ENCODE measurements at regions of chr5 and their contacts with region 1.

Region 1: DNA sequence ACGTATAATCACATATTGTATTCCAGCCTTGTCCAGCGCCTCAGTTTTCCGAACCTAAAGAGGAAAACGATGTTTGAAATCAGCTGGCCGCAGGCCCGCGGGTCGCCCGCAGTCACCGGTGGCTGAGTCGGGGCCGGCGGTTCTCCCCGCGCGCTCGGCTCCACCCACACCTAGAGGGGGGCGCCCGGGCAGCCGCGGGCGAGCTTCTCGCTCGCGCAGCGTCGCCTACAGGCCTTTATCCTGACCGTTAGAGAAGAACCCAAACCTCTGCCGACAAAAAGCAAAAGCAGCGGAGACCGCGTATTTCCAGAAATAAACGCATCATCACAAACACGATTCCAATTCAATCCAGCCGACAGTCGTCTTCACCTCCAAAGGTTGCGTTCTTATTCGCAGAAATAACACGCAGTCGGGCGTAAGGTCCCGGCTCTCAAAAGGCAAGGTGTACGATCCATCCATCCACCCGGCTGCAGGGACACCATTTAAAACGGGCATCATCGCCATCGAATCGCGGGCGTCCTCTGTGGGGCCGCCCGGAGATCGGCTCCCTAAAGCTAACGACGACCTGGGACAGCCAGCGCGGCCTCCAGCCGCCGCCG is 680 bp upstream of the NIPBL start:
- DNase-seq: peak; percentile 87
- H3K4me3 ChIP-seq: peak overlapping the region; percentile 82
- H3K27ac ChIP-seq: peak overlapping the region; percentile 91
- H3K4me1 ChIP-seq: peaks cover 49% of the 10 kb centered on the region
- CTCF ChIP-seq: peak; percentile 74

Region 2: DNA sequence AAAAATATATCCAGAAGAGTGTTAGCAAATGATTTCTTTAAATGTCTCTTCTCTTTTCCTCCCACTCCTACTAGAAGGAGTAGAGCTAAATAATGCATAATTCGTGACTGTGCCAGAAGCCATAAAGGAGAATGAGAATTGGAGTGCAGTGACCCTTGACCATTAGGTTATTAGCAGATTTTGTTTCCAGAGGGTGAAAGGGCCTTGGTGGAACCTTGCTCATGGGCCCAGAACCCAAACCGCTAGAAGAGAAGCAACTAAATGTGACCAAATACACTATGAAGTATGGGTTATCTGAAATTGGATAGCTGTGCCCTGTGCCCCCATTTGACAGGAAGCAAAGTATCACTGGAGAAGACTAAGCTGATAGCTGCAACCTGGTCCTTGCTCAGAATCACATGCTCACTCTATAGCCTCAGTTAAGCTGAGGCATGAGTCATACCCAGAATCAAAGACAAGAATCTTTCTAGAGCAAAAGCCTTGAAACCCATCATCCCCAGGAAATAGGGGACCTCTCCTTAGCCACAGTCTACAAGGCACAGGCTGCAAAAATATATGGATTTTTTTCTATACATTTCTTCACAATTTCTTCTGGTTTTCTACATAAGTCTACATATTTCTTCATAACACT is 973.7 kb before region 1 on chr5:
- CTCF ChIA-PET with region 1: no interaction called
- POLR2A ChIA-PET with region 1: no interaction called
- intact Hi-C with region 1: loop called (anchors 10 kb)
- DNase-seq: no peak
- H3K4me3 ChIP-seq: no peak overlapping the region
- H3K27ac ChIP-seq: peak overlapping the region; percentile 54
- H3K4me1 ChIP-seq: peaks cover 87% of the 10 kb centered on the region
- CTCF ChIP-seq: no peak

Region 3: GRCh38 chr5:36728697-36729543 is 147.0 kb before region 1 on chr5:
- CTCF ChIA-PET with region 1: no interaction called
- POLR2A ChIA-PET with region 1: interaction called, 11 read pairs
- intact Hi-C with region 1: loop called (anchors 1 kb)
- DNase-seq: peak; percentile 73
- H3K4me3 ChIP-seq: no peak overlapping the region
- H3K27ac ChIP-seq: no peak overlapping the region
- H3K4me1 ChIP-seq: peaks cover 16% of the 10 kb centered on the region
- CTCF ChIP-seq: peak; percentile 90

Region 4: DNA sequence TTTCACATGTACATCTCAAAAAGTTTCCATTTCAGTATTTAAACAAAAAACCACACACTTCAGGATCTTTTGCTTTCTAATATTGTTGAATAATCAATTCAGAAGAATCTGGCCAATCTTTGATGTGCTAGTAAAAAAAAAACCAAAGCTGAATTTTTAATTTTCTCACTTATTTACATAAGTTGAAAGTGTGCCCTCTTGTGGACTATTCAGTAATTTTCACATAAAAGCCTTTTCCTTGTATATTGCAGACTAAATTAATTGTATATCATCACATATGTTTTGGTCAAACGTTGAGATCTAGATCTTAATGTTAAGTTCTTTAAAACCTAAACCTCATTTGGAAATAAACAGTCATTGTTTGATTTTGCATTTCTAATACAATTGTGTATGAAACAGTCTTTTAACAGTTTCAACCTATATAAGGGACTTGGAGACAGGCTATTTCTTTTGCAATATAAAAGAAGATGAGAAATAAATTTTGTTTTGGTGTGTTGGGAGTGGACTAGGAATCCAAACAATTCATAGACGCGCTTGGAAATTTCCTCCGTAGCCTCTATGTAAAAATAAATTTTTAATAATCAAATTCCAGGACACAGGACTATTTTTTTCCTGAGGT is 68.8 kb after region 1 on chr5:
- CTCF ChIA-PET with region 1: no interaction called
- POLR2A ChIA-PET with region 1: interaction called, 3 read pairs
- intact Hi-C with region 1: loop called (anchors 5 kb)
- DNase-seq: peak; percentile 74
- H3K4me3 ChIP-seq: no peak overlapping the region
- H3K27ac ChIP-seq: no peak overlapping the region
- H3K4me1 ChIP-seq: no peaks in the 10 kb centered on the region
- CTCF ChIP-seq: peak; percentile 87

Region 5: DNA sequence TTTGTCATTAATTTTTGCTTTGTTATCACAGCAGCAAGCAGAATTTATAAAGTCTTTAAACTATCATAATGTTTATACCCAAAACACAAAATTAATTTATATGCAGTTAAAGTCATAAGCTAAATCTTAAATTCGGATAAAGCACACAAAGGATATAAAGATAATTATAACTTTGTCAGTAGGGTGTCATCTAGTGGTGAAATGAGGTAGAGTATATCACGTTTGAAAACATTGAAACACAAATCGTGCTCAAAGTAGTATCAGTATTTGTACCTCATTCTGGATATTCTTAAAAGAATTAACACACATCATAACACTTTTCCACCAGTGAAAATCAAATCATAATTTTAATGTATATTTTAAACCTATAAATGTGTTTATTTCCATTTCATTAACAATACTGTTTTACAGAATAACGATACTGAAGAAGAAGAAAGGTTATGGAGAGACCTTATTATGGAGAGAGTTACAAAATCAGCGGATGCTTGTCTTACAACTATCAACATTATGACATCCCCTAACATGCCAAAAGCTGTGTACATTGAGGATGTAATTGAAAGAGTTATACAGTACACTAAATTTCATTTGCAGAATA is 130.2 kb after region 1 on chr5:
- CTCF ChIA-PET with region 1: no interaction called
- POLR2A ChIA-PET with region 1: no interaction called
- intact Hi-C with region 1: loop called (anchors 5 kb)
- DNase-seq: peak; percentile 43
- H3K4me3 ChIP-seq: no peak overlapping the region
- H3K27ac ChIP-seq: no peak overlapping the region
- H3K4me1 ChIP-seq: no peaks in the 10 kb centered on the region
- CTCF ChIP-seq: peak; percentile 94

Region 6: GRCh38 chr5:37437711-37438110 is 561.8 kb after region 1 on chr5:
- CTCF ChIA-PET with region 1: no interaction called
- POLR2A ChIA-PET with region 1: no interaction called
- intact Hi-C with region 1: no loop called
- DNase-seq: no peak
- H3K4me3 ChIP-seq: no peak overlapping the region
- H3K27ac ChIP-seq: no peak overlapping the region
- H3K4me1 ChIP-seq: no peaks in the 10 kb centered on the region
- CTCF ChIP-seq: no peak